ENCODE measurements at regions of chr6 and their contacts with region 1.

Region 1: DNA sequence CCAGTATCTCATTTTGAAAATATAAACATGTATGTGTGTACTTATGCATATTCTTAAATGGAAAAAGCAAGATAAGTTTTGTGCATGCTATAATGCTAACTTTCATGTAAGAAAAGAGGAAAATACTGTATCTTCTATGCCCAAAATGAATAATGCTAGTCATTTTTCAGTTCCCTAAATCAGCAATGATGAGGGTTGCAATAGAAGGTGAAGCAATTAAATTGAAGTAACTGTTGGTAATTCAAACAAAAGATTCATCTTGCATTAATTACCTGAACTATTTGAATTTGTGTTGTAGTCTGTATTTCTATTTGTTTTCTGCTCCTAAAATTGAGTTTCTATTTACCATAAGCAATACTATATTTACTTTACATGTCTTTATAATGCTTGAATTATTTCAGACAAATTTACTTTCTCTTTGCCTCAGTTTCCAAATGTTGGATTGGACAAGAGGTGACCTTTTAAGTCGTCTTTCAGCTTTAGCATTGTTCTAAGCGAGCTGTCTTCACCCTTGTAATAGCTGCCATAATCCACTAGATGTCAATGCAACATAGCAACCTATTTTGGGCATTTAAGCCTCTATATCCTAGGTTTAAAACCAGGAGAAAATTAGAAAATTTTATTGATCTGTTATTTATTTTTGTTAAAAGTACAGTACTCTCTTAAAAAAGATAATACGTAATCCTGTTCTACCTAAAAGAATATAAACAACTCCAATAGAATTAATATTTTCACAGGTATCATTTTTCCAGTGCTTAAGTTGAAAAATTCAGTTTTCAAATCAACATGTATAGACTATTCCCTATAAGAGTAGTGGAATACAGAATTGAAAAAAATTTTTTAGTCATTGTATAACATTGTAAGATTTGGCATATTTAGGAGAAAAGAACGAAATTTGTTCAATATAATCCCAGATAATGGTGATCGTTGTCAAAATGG is 52.3 kb upstream of the IFNGR1 start:
- DNase-seq: peak in 1 of 2 experiments; percentile 54
- H3K4me3 ChIP-seq: no peak overlapping the region
- H3K27ac ChIP-seq: no peak overlapping the region
- H3K4me1 ChIP-seq: no peaks in the 10 kb centered on the region
- H3K27me3 ChIP-seq: peaks cover 3% of the 10 kb centered on the region; the same call in 1 of the 2 replicates
- CTCF ChIP-seq: peak; percentile 98

Region 2: DNA sequence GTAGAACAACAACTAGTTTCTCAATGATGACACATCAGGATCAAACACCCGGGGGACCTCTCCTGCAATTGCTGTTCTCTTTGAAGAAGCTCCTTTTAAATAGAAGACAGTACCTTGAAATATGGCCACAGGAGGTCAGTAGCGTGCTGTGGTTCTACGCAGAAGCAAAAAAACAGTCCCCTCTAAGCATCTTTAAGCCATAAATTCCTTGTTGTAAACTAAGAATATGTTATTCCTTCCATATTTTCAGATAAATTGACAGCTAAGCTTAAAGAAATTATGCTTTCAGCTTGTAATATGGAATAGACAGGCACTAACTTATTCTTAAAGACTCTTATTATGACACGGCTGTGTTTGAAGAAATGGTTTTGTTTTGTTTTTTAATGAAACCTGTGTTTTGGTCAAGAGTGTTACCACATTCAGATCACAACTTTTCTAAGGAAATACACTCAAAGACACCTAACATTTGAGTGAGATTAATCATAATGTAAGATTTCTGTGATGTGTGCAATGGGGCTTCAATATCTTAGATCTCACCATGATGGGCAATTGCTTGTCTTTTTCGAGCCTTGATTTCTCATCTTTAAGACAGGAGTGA is 177.0 kb before region 1 on chr6:
- CTCF ChIA-PET with region 1: interaction called, 5 read pairs
- POLR2A ChIA-PET with region 1: no interaction called
- intact Hi-C with region 1: loop called (anchors 1 kb)
- DNase-seq: peak; percentile 53 to 82
- H3K4me3 ChIP-seq: no peak overlapping the region
- H3K27ac ChIP-seq: no peak overlapping the region
- H3K4me1 ChIP-seq: peaks cover 5% of the 10 kb centered on the region
- H3K27me3 ChIP-seq: no peaks in the 10 kb centered on the region
- CTCF ChIP-seq: peak; percentile 92

Region 3: GRCh38 chr6:137415127-137415833 is 143.8 kb after region 1 on chr6:
- CTCF ChIA-PET with region 1: no interaction called
- POLR2A ChIA-PET with region 1: no interaction called
- intact Hi-C with region 1: loop called (anchors 5 kb)
- DNase-seq: peak; percentile 40 to 51
- H3K4me3 ChIP-seq: peak overlapping the region; percentile 45
- H3K27ac ChIP-seq: no peak overlapping the region
- H3K4me1 ChIP-seq: no peaks in the 10 kb centered on the region
- H3K27me3 ChIP-seq: no peaks in the 10 kb centered on the region
- CTCF ChIP-seq: peak; percentile 71

Region 4: DNA sequence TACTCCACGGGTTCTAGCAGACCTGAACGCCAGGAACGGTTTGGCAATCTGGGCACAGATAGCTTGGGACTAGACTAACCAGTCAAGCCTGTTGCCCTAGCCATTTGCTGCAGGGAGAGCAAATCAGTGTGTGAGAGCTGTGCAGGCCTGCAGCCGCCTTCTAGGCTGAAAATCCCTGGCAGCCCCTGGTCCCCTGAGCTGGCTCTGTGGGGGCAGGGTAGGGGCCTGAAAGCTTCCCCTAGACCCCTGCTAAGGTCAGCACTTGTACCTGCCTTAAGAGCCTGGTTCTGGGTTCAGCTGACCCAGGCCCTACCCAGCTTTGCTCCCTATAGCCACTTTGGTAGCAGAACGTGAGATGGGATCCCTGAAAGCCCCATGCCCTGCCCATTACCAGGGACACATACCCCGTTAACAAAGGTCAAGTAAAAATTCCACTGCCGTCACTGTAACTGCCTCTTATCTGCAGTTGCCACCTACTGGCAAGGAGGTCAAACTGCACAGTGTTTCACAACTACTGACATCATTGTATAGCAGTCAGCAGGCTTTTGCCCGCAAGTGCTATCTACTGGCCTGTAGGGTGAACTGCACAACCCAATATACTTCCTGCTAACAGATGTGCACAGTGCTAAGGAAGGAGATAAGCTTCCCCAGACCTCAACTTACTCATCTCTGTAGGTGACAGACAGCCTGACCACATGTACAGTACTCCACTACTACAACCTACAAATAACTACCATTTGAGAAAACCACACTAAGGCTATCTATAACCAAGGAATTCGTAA is 317.7 kb after region 1 on chr6:
- CTCF ChIA-PET with region 1: no interaction called
- POLR2A ChIA-PET with region 1: no interaction called
- intact Hi-C with region 1: loop called (anchors 2 kb)
- DNase-seq: peak; percentile 50 to 92
- H3K4me3 ChIP-seq: peak overlapping the region; percentile 27; the same call in 1 of the 2 replicates
- H3K27ac ChIP-seq: peak overlapping the region; percentile 22; the same call in 1 of the 2 replicates
- H3K4me1 ChIP-seq: peaks cover 14% of the 10 kb centered on the region
- H3K27me3 ChIP-seq: no peaks in the 10 kb centered on the region
- CTCF ChIP-seq: peak; percentile 96

Region 5: GRCh38 chr6:137602313-137603270 is 331.1 kb after region 1 on chr6:
- CTCF ChIA-PET with region 1: no interaction called
- POLR2A ChIA-PET with region 1: no interaction called
- intact Hi-C with region 1: no loop called
- DNase-seq: no peak
- H3K4me3 ChIP-seq: no peak overlapping the region
- H3K27ac ChIP-seq: no peak overlapping the region
- H3K4me1 ChIP-seq: no peaks in the 10 kb centered on the region
- H3K27me3 ChIP-seq: peaks cover 19% of the 10 kb centered on the region; the same call in 1 of the 2 replicates
- CTCF ChIP-seq: no peak

Region 6: GRCh38 chr6:137975188-137975940 is 703.9 kb after region 1 on chr6:
- CTCF ChIA-PET with region 1: no interaction called
- POLR2A ChIA-PET with region 1: no interaction called
- intact Hi-C with region 1: loop called (anchors 10 kb)
- DNase-seq: no peak
- H3K4me3 ChIP-seq: no peak overlapping the region
- H3K27ac ChIP-seq: no peak overlapping the region
- H3K4me1 ChIP-seq: peaks cover 36% of the 10 kb centered on the region
- H3K27me3 ChIP-seq: no peaks in the 10 kb centered on the region
- CTCF ChIP-seq: peak; percentile 77